Aorta (tissue), 5 donors: ENCODE measurements at regions of chr6 and their contacts with region 1.

Region 1: DNA sequence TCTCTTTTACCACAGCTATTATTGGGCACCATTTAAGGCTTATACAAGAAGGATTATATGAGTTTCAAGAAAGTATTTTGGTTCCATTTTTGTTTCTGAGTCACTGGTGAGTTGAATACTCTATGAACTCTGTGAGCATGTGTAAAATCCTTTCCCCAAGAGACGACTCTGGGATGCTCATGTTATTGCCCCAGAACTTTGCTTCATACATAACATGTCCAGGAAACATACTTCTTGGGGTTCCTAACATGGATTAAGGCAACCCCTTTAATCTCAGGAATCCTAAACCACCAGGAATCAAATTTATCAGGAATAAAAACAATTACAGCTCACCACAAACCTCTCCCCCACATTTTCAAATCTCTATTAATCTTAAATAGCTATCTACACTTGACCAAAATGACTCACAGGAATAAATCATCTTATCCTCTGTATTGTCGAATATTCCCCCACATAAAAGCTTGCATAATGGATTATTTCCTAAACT is 117.5 kb upstream of the COL21A1 start:
- DNase-seq: no peak
- ATAC-seq: no peak
- H3K4me3 ChIP-seq: no peak overlapping the region
- H3K27ac ChIP-seq: no peak overlapping the region
- H3K4me1 ChIP-seq: peaks cover 0 to 2% of the 10 kb centered on the region in 2 donors
- H3K27me3 ChIP-seq: no peaks in the 10 kb centered on the region

Region 2: GRCh38 chr6:56555438-56555872 is 190.6 kb after region 1 on chr6:
- intact Hi-C with region 1: loop called in 1 of 2 experiments (anchors 10 kb)
- DNase-seq: no peak
- ATAC-seq: no peak
- H3K4me3 ChIP-seq: no peak overlapping the region
- H3K27ac ChIP-seq: peak overlapping the region in 1 of 2 donors; percentile 35
- H3K4me1 ChIP-seq: peaks cover 5 to 7% of the 10 kb centered on the region in 2 donors
- H3K27me3 ChIP-seq: no peaks in the 10 kb centered on the region

Region 3: GRCh38 chr6:56570413-56571359 is 205.8 kb after region 1 on chr6:
- intact Hi-C with region 1: loop called in 1 of 2 experiments (anchors 5 kb)
- DNase-seq: no peak
- ATAC-seq: peak; percentile 74
- H3K4me3 ChIP-seq: no peak overlapping the region
- H3K27ac ChIP-seq: no peak overlapping the region
- H3K4me1 ChIP-seq: no peaks in the 10 kb centered on the region
- H3K27me3 ChIP-seq: no peaks in the 10 kb centered on the region

Region 4: GRCh38 chr6:56757588-56757984 is 392.7 kb after region 1 on chr6:
- intact Hi-C with region 1: loop called in 1 of 2 experiments (anchors 10 kb)
- DNase-seq: no peak
- ATAC-seq: peak; percentile 67
- H3K4me3 ChIP-seq: no peak overlapping the region
- H3K27ac ChIP-seq: peak overlapping the region in 1 of 2 donors; percentile 30
- H3K4me1 ChIP-seq: peaks cover 0 to 6% of the 10 kb centered on the region in 2 donors
- H3K27me3 ChIP-seq: no peaks in the 10 kb centered on the region

Region 5: GRCh38 chr6:56862415-56863175 is 497.7 kb after region 1 on chr6:
- intact Hi-C with region 1: loop called in 1 of 2 experiments (anchors 10 kb)
- DNase-seq: no peak
- ATAC-seq: no peak
- H3K4me3 ChIP-seq: peak overlapping the region; percentile 9 to 32
- H3K27ac ChIP-seq: no peak overlapping the region
- H3K4me1 ChIP-seq: peaks cover 0 to 4% of the 10 kb centered on the region in 2 donors
- H3K27me3 ChIP-seq: no peaks in the 10 kb centered on the region